Thyroid gland (tissue), 4 donors: ENCODE measurements at regions of chr6 and their contacts with region 1.

Region 1: DNA sequence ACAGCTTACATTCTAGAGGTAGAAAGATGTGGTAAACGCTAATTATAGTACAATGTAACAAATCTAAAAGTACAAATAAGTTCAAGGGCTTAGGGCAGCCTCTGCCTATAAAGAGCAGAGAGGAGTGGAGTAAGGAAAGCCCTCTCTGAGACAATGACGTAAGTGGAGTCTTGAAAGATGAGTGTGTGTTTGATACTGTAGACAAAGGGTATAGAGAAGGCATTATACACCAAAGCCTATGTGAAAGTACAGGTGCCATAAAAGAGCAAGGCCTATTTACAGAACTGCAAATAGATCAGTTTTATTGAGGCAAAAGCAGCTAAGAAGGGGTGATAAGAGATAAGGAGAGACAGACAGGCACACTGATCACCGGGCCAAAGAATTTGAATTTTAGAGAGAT is 10.9 kb downstream of the GOPC start:
- DNase-seq: no peak
- H3K4me3 ChIP-seq: no peak overlapping the region
- H3K27ac ChIP-seq: no peak overlapping the region
- H3K4me1 ChIP-seq: no peaks in the 10 kb centered on the region
- H3K27me3 ChIP-seq: no peaks in the 10 kb centered on the region
- CTCF ChIP-seq: no peak
- POLR2A ChIP-seq: no peak

Region 2: GRCh38 chr6:117381749-117382148 is 209.7 kb before region 1 on chr6:
- intact Hi-C with region 1: no loop called
- DNase-seq: no peak
- H3K4me3 ChIP-seq: no peak overlapping the region
- H3K27ac ChIP-seq: no peak overlapping the region
- H3K4me1 ChIP-seq: no peaks in the 10 kb centered on the region
- H3K27me3 ChIP-seq: no peaks in the 10 kb centered on the region
- CTCF ChIP-seq: no peak
- POLR2A ChIP-seq: no peak

Region 3: GRCh38 chr6:117547688-117548621 is 43.5 kb before region 1 on chr6:
- intact Hi-C with region 1: loop called (anchors 10 kb)
- DNase-seq: peak; percentile 90 to 92
- H3K4me3 ChIP-seq: peak overlapping the region; percentile 14 to 41 (median 32)
- H3K27ac ChIP-seq: peak overlapping the region; percentile 23 to 72 (median 66)
- H3K4me1 ChIP-seq: peaks cover 10 to 27% of the 10 kb centered on the region in 2 donors
- H3K27me3 ChIP-seq: no peaks in the 10 kb centered on the region
- CTCF ChIP-seq: peak in 1 of 6 experiments; percentile 30
- POLR2A ChIP-seq: peak in 1 of 2 donors; percentile 78